ENCODE measurements at regions of chr10 and their contacts with region 1.

Region 1: GRCh38 chr10:102555781-102556328 is 52.1 kb downstream of the SUFU start:
- DNase-seq: no peak
- H3K4me3 Mint-ChIP-seq: no peak overlapping the region
- H3K27ac Mint-ChIP-seq: no peak overlapping the region
- H3K4me1 Mint-ChIP-seq: no peaks in the 10 kb centered on the region
- H3K27me3 Mint-ChIP-seq: no peaks in the 10 kb centered on the region
- CTCF ChIP-seq: no peak

Region 2: GRCh38 chr10:102534333-102534732 is 21.5 kb before region 1 on chr10:
- CTCF ChIA-PET with region 1: interaction called, 10 read pairs
- intact Hi-C with region 1: no loop called
- DNase-seq: no peak
- H3K4me3 Mint-ChIP-seq: no peak overlapping the region
- H3K27ac Mint-ChIP-seq: no peak overlapping the region
- H3K4me1 Mint-ChIP-seq: no peaks in the 10 kb centered on the region
- H3K27me3 Mint-ChIP-seq: no peaks in the 10 kb centered on the region
- CTCF ChIP-seq: no peak

Region 3: GRCh38 chr10:102988404-102989314 is 432.8 kb after region 1 on chr10:
- CTCF ChIA-PET with region 1: no interaction called
- intact Hi-C with region 1: no loop called
- DNase-seq: no peak
- H3K4me3 Mint-ChIP-seq: no peak overlapping the region
- H3K27ac Mint-ChIP-seq: no peak overlapping the region
- H3K4me1 Mint-ChIP-seq: no peaks in the 10 kb centered on the region
- H3K27me3 Mint-ChIP-seq: no peaks in the 10 kb centered on the region
- CTCF ChIP-seq: no peak

Measured in Calu3 (cell line).